Naive thymus-derived CD4-positive, alpha-beta T cell (primary cell): ENCODE measurements at regions of chr3 and their contacts with region 1.

Region 1: DNA sequence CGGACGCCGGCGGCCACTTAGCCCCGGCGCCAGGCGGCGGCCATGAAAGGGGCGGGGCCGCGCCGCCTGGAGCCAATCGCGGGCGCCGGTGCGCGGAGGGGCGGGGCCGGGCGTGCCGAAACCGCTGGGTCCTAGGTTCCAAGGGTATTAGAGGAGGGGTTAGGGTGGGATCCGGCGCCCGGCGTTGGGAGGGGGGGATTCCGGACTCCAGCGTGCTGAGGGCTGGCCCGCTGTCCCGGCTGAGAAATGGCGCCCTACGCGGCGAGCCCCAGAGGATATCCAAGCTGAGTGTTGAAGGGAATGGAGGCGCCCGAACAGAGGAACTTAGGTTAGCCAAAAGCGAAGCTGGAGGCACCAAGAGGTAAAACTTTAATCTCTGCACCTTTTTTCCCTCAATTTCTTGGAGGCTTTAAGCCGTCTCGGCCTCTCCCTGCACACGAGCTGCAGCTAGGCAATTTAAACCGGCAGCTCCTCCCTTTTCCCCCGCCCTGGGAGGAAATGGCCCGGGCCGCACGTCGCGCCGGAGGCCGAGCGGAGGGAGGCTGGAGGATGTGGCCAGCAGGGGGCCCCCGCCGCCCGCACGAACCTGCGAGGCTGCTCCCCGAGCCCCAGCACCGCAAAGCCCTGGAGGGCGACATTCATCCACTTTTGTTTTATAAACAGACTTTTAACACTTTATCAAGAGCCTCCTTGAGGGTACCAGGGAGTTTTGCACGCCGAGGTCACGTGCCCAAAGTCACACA is at the start of gene XXYLT1:
- DNase-seq: peak; percentile 82 to 93 (median 91)
- ATAC-seq: peak; percentile 93
- H3K4me3 ChIP-seq: peak within 1 kb of the TSS; percentile 97
- H3K4me3 Mint-ChIP-seq: peak within 1 kb of the TSS; percentile 82 to 91 (median 90)
- H3K27ac ChIP-seq: peak within 1 kb of the TSS; percentile 64
- H3K27ac Mint-ChIP-seq: peak within 1 kb of the TSS; percentile 63 to 89 (median 86)
- H3K4me1 ChIP-seq: peaks cover 16 to 22% of the 10 kb centered on the region in 2 donors
- H3K4me1 Mint-ChIP-seq: peaks cover 16 to 36% (median 29%) of the 10 kb centered on the region in 7 donors
- H3K27me3 ChIP-seq: no peaks in the 10 kb centered on the region
- H3K27me3 Mint-ChIP-seq: no peaks in the 10 kb centered on the region
- total RNA-seq, gene XXYLT1: 4.1 to 11.7 (median 9.1) TPM

Region 2: GRCh38 chr3:194323785-194324735 is 947.2 kb before region 1 on chr3:
- CTCF ChIA-PET with region 1: no interaction called
- POLR2A ChIA-PET with region 1: no interaction called
- intact Hi-C with region 1: no loop called
- DNase-seq: peak in 6 of 9 donors; percentile 21 to 54 (median 40)
- ATAC-seq: peak; percentile 80
- H3K4me3 ChIP-seq: peak overlapping the region; percentile 52
- H3K4me3 Mint-ChIP-seq: no peak overlapping the region
- H3K27ac ChIP-seq: no peak overlapping the region
- H3K27ac Mint-ChIP-seq: peak overlapping the region in 1 of 9 donors; percentile 58
- H3K4me1 ChIP-seq: peaks cover 0 to 9% of the 10 kb centered on the region in 2 donors
- H3K4me1 Mint-ChIP-seq: peaks cover 0 to 4% (median 0%) of the 10 kb centered on the region in 7 donors
- H3K27me3 ChIP-seq: no peaks in the 10 kb centered on the region
- H3K27me3 Mint-ChIP-seq: peaks cover 0 to 19% (median 0%) of the 10 kb centered on the region in 5 donors

Region 3: DNA sequence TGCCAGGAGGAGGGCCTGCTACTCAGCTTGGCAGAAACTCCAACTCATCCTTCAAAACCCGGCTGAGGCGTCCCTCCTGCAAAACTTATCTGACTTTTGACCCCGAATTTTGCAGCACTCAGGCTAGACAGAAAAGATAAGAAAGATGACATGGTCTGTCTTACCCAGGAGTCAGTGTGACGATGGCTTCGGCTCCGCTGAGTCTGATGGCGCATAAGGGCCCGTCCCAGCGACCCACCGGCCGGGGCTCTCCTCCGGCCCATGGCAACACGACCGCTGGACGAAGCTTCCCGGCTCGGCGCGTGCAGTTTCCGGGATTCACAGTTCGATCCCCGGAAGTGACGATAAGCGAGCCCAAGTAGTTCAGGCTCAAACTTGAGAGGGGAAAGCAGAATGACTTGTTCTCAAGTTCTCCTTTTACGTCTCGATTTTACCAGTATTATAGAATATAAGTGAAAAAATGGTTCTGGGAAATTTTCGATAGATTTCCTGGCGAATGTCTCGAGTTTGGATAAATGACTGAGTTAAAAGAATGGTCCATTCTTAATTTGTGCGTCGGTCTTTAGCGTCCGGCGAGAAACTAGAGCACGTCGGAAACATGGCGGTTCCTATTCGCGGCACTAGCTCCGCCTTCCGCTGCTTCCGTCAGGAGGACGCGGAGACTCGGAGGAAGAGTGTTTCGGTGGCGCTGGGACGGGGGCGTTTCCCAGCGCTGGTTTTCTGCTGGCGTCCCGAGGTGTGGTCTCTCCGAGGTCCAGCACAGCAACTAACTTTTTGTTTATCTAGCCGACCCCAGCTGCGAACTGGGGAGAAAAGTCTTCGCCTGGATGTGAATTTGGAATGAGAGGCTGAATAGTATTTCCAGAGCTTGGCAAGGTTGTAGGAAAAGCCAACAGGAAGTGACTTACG is 599.1 kb before region 1 on chr3 and contains the start of gene LSG1:
- CTCF ChIA-PET with region 1: interaction called, 7 read pairs
- POLR2A ChIA-PET with region 1: interaction called, 12 read pairs
- intact Hi-C with region 1: loop called in 1 of 2 experiments (anchors 1 kb)
- DNase-seq: peak; percentile 68 to 92 (median 87)
- ATAC-seq: peak; percentile 98
- H3K4me3 ChIP-seq: peak within 1 kb of the TSS; percentile 96
- H3K4me3 Mint-ChIP-seq: peak within 1 kb of the TSS; percentile 95 to 100 (median 98)
- H3K27ac ChIP-seq: peak within 1 kb of the TSS; percentile 90
- H3K27ac Mint-ChIP-seq: peak within 1 kb of the TSS; percentile 96 to 99 (median 98)
- H3K4me1 ChIP-seq: peaks cover 11 to 19% of the 10 kb centered on the region in 2 donors
- H3K4me1 Mint-ChIP-seq: peaks cover 21 to 52% (median 38%) of the 10 kb centered on the region in 7 donors
- H3K27me3 ChIP-seq: no peaks in the 10 kb centered on the region
- H3K27me3 Mint-ChIP-seq: no peaks in the 10 kb centered on the region
- total RNA-seq, gene LSG1: 33.5 to 59.2 (median 54.9) TPM

Region 4: GRCh38 chr3:195259475-195260279 is 11.6 kb before region 1 on chr3:
- CTCF ChIA-PET with region 1: interaction called, 34 read pairs
- POLR2A ChIA-PET with region 1: interaction called, 12 read pairs
- intact Hi-C with region 1: loop called (anchors 1 kb)
- DNase-seq: peak; percentile 80 to 90 (median 84)
- ATAC-seq: peak; percentile 94
- H3K4me3 ChIP-seq: peak overlapping the region; percentile 36
- H3K4me3 Mint-ChIP-seq: peak overlapping the region; percentile 32 to 84 (median 64)
- H3K27ac ChIP-seq: peak overlapping the region; percentile 73
- H3K27ac Mint-ChIP-seq: peak overlapping the region in 7 of 9 donors; percentile 46 to 88 (median 84)
- H3K4me1 ChIP-seq: peaks cover 17 to 19% of the 10 kb centered on the region in 2 donors
- H3K4me1 Mint-ChIP-seq: peaks cover 13 to 24% (median 19%) of the 10 kb centered on the region in 7 donors
- H3K27me3 ChIP-seq: no peaks in the 10 kb centered on the region
- H3K27me3 Mint-ChIP-seq: no peaks in the 10 kb centered on the region

Region 5: GRCh38 chr3:195522254-195523023 is 251.2 kb after region 1 on chr3:
- CTCF ChIA-PET with region 1: interaction called, 76 read pairs
- POLR2A ChIA-PET with region 1: interaction called, 6 read pairs
- intact Hi-C with region 1: loop called (anchors 1 kb)
- DNase-seq: peak in 6 of 9 donors; percentile 19 to 56 (median 50)
- ATAC-seq: peak; percentile 64
- H3K4me3 ChIP-seq: no peak overlapping the region
- H3K4me3 Mint-ChIP-seq: peak overlapping the region in 4 of 10 donors; percentile 10 to 61 (median 35)
- H3K27ac ChIP-seq: peak overlapping the region; percentile 50
- H3K27ac Mint-ChIP-seq: peak overlapping the region in 8 of 9 donors; percentile 56 to 91 (median 82)
- H3K4me1 ChIP-seq: peaks cover 18 to 33% of the 10 kb centered on the region in 2 donors
- H3K4me1 Mint-ChIP-seq: peaks cover 18 to 64% (median 56%) of the 10 kb centered on the region in 7 donors
- H3K27me3 ChIP-seq: no peaks in the 10 kb centered on the region
- H3K27me3 Mint-ChIP-seq: no peaks in the 10 kb centered on the region

Region 6: DNA sequence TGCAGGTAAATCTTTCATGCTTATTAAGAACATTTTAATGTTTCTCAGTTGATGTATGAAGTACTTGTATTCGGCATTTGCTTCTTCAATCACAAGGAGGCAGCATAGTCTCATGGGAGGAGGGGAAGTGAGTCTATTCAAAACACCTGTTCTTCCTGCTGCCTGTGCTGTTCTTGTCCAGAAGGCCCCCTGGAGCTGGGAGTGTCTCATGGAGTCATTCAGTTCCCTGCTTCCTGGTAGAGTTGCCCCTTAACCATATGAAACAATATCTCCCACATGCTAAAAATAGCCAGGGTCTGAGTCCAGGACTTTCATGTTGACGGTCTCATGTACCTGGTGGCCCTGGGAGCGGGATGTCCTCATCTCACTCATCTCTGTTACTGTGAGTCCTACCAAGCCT is 287.3 kb after region 1 on chr3:
- CTCF ChIA-PET with region 1: interaction called, 7 read pairs
- POLR2A ChIA-PET with region 1: no interaction called
- intact Hi-C with region 1: loop called in 1 of 2 experiments (anchors 1 kb)
- DNase-seq: peak in 7 of 9 donors; percentile 56 to 75 (median 67)
- ATAC-seq: peak; percentile 72
- H3K4me3 ChIP-seq: no peak overlapping the region
- H3K4me3 Mint-ChIP-seq: peak overlapping the region in 1 of 10 donors; percentile 33
- H3K27ac ChIP-seq: no peak overlapping the region
- H3K27ac Mint-ChIP-seq: peak overlapping the region in 8 of 9 donors; percentile 46 to 83 (median 68)
- H3K4me1 ChIP-seq: peaks cover 0 to 37% of the 10 kb centered on the region in 2 donors
- H3K4me1 Mint-ChIP-seq: peaks cover 20 to 45% (median 38%) of the 10 kb centered on the region in 7 donors
- H3K27me3 ChIP-seq: no peaks in the 10 kb centered on the region
- H3K27me3 Mint-ChIP-seq: no peaks in the 10 kb centered on the region

Region 7: GRCh38 chr3:195815169-195815771 is 544.0 kb after region 1 on chr3:
- CTCF ChIA-PET with region 1: no interaction called
- POLR2A ChIA-PET with region 1: no interaction called
- intact Hi-C with region 1: no loop called
- DNase-seq: no peak
- ATAC-seq: no peak
- H3K4me3 ChIP-seq: no peak overlapping the region
- H3K4me3 Mint-ChIP-seq: no peak overlapping the region
- H3K27ac ChIP-seq: no peak overlapping the region
- H3K27ac Mint-ChIP-seq: no peak overlapping the region
- H3K4me1 ChIP-seq: no peaks in the 10 kb centered on the region
- H3K4me1 Mint-ChIP-seq: peaks cover 0 to 15% (median 4%) of the 10 kb centered on the region in 7 donors
- H3K27me3 ChIP-seq: no peaks in the 10 kb centered on the region
- H3K27me3 Mint-ChIP-seq: peaks cover 0 to 3% (median 0%) of the 10 kb centered on the region in 5 donors

Region 8: GRCh38 chr3:195894780-195895607 is 623.7 kb after region 1 on chr3:
- CTCF ChIA-PET with region 1: no interaction called
- POLR2A ChIA-PET with region 1: no interaction called
- intact Hi-C with region 1: loop called (anchors 1 to 10 kb)
- DNase-seq: peak; percentile 58 to 77 (median 69)
- ATAC-seq: peak; percentile 78
- H3K4me3 ChIP-seq: peak overlapping the region; percentile 98
- H3K4me3 Mint-ChIP-seq: peak overlapping the region; percentile 88 to 96 (median 92)
- H3K27ac ChIP-seq: peak overlapping the region; percentile 75
- H3K27ac Mint-ChIP-seq: peak overlapping the region; percentile 88 to 96 (median 91)
- H3K4me1 ChIP-seq: peaks cover 7 to 32% of the 10 kb centered on the region in 2 donors
- H3K4me1 Mint-ChIP-seq: peaks cover 43 to 60% (median 49%) of the 10 kb centered on the region in 7 donors
- H3K27me3 ChIP-seq: no peaks in the 10 kb centered on the region
- H3K27me3 Mint-ChIP-seq: no peaks in the 10 kb centered on the region